AG04449 (cell line): ENCODE measurements at regions of chr2 and their contacts with region 1.

Region 1: DNA sequence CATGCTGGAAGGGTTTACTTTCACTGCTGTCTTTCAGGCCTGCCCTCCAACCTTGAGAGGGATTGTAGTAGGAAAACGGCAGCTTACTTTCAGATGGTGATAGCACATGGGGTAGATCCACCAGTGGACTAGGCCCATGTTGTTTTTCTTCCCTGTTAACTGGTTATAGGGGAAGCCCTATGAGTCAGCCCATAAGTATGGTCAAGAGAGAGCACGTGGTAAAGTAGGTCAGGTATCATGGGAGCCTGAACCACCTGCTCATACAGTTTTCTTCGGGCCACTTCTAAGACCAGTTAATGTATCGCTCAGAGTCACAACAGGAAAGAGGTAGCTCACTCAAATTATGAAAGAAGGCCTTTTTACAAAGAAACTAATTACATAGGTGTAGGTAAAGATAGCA is 33.0 kb downstream of the PDK1 start:
- DNase-seq: no peak
- H3K4me3 ChIP-seq: no peak overlapping the region
- CTCF ChIP-seq: no peak

Region 2: DNA sequence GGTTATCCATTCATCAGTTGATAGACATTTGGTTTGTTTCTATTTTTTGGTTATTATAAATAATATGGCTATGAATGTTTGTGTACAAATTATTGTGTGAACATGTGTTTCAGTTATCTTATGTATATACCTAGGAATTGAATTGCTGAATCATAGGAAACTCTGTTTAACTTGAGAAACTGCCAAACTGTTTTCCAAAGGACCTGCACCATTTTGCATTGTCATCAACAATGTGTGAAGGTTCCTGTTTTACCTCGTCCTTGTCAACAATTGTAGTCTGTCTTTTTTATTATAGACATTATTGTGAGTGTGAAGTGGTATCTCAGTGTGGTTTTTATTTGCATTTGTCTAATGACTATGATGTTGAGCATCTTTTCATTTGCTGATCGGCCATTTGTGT is 15.9 kb before region 1 on chr2:
- CTCF ChIA-PET with region 1: interaction called, 16 read pairs
- POLR2A ChIA-PET with region 1: no interaction called
- DNase-seq: no peak
- H3K4me3 ChIP-seq: no peak overlapping the region
- CTCF ChIP-seq: no peak

Region 3: GRCh38 chr2:172606285-172606684 is 17.4 kb after region 1 on chr2:
- CTCF ChIA-PET with region 1: interaction called, 26 read pairs
- POLR2A ChIA-PET with region 1: no interaction called
- DNase-seq: peak; percentile 21
- H3K4me3 ChIP-seq: no peak overlapping the region
- CTCF ChIP-seq: no peak

Region 4: DNA sequence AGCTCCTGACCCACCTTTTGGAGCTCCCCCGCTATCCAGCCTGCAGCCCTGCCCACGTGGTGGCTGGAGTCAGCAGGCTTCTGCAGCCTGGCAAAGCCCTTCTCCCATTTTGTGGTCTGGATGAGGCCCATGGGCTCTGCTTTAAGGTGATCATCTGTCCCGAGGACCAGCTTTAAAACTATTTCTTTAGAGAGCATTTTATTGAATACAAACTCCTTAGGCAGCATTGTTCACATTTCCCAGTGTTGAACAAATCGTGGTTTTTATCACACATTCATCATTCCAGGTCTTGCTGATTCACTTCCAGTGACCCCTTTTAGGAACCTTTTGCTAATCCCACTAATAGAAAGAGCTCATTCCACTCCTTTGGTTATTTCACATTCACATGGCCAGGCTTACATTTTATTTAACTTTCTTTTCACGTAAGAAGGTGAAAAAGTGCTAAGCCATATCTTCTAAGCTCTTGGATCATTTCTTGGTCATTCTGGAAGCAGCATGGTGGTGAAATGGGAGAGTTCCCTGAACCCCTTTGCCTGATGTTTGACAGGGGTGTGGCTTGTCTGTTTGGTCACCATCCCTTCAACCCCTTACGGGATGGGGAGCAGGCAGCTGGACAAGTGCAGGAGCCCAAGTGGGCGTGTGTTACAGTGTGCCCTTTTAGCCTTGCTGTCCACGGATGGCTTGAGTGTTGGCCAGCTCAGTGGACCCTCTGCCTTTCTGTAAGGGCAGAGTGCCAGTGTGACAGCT is 66.3 kb after region 1 on chr2:
- CTCF ChIA-PET with region 1: interaction called, 12 read pairs
- POLR2A ChIA-PET with region 1: no interaction called
- DNase-seq: peak; percentile 59
- H3K4me3 ChIP-seq: no peak overlapping the region
- CTCF ChIP-seq: no peak

Region 5: DNA sequence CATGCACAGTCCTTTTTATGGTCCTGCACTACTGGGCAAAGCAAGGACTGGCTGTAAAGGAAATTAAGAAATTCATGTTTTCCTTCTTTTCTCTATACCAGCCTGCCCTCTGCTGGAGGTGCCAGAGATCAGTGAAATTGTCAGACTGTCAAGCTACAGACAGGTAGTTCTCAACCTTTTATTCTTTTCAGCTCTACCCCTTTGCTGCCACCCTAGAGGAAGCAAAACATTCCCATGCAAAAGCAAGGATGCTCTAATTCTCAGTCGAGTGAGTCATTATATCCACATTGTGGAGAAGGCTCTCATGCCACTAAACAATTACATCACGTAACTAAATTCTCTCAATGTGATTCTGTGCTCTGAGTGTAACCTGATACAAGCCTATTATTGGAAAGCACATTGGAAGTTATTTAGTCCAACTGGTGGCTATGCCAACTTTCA is 121.7 kb after region 1 on chr2:
- CTCF ChIA-PET with region 1: interaction called, 30 read pairs
- POLR2A ChIA-PET with region 1: no interaction called
- DNase-seq: peak; percentile 84
- H3K4me3 ChIP-seq: no peak overlapping the region
- CTCF ChIP-seq: peak; percentile 40